ENCODE measurements at regions of chr1 and their contacts with region 1.

Region 1: GRCh38 chr1:66446261-66447001 is 87.5 kb upstream of the SGIP1 start:
- DNase-seq: peak; percentile 24 to 36
- H3K4me3 ChIP-seq: no peak overlapping the region
- H3K27ac ChIP-seq: no peak overlapping the region
- H3K4me1 ChIP-seq: no peaks in the 10 kb centered on the region
- H3K27me3 ChIP-seq: no peaks in the 10 kb centered on the region
- CTCF ChIP-seq: peak; percentile 86

Region 2: GRCh38 chr1:65059930-65060538 is 1386.4 kb before region 1 on chr1:
- CTCF ChIA-PET with region 1: no interaction called
- POLR2A ChIA-PET with region 1: no interaction called
- intact Hi-C with region 1: loop called (anchors 2 kb)
- DNase-seq: peak in 1 of 2 experiments; percentile 48
- H3K4me3 ChIP-seq: no peak overlapping the region
- H3K27ac ChIP-seq: no peak overlapping the region
- H3K4me1 ChIP-seq: no peaks in the 10 kb centered on the region
- H3K27me3 ChIP-seq: no peaks in the 10 kb centered on the region
- CTCF ChIP-seq: peak; percentile 78

Region 3: DNA sequence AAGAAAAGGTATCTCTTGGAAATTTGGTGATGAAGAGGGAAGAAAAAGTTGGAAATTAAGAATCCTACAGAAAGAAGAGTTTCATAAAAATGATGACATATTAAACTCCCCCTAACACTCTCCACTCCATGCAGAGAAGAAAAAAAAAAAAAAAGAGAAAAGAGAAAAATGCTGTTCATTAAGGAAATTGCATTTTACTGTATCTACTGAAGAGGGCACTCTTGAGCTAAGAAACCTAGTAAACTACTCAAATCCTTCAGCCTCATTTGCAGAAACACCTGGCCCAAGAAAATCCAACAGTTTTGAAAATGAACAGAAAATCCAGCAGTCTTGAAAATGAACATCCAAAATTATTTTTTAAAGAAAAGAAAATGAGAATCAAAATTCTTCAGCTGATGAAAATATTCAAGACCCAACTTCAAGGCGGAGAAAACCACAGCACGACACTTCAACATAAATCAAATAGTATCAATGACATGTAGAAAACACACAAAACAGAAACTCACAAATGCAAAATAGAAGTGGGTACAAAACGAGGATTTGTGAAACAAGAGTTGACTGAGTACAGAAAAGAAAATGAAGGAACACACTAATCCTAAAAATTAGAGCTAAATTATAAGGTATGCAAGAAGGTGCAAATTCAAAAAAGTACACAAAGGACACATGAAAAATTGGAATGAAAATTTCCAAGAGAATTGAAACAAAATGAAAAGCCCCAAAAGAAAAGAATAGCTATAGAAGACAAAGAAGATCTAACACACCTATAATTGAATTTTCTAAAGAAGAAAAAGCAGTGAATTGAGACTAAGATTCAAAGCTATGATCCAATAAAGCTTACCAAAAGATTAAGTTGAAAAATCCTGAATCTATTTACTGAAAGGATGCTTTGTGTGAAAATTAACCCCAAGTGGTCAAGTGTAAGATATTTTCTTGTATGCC is 1210.3 kb before region 1 on chr1:
- CTCF ChIA-PET with region 1: no interaction called
- POLR2A ChIA-PET with region 1: no interaction called
- intact Hi-C with region 1: loop called (anchors 10 kb)
- DNase-seq: no peak
- H3K4me3 ChIP-seq: no peak overlapping the region
- H3K27ac ChIP-seq: no peak overlapping the region
- H3K4me1 ChIP-seq: no peaks in the 10 kb centered on the region
- H3K27me3 ChIP-seq: no peaks in the 10 kb centered on the region
- CTCF ChIP-seq: peak; percentile 87

Region 4: DNA sequence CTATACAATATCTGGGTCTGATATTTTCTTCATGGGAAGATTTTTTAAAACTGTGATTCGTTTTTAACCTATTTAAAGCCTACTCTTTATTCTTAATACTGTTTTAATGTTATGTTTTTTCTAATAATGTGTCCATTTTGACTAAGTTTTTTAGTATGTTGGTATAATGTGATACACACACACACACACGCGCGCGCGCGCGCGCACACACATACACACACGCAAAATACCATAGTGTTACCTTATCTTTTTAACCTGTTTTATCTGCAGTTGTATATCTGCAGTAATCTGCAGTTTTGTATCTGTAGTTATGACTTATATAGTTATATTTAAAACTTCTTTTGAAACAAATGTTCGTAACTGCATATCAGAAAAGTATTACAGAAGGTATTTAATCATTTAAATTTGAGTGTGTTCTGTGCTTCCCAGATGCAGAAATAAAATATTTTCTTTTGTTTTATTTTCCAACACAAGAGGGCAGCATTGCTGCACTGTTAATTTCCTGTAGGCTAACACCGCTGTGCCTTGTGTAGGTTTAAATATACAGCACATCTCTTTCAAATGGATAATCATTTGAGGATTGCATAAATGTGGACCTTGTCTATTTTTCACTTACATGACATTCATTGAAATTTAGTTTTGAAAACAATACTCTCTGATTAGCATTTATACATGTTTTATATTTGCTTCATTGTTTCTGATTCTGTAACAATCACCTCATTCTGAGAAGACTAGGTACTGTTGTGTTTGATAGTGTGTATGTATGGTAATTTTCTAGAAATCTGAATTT is 487.7 kb before region 1 on chr1:
- CTCF ChIA-PET with region 1: interaction called, 4 read pairs
- POLR2A ChIA-PET with region 1: interaction called, 6 read pairs
- intact Hi-C with region 1: loop called (anchors 1 kb)
- DNase-seq: no peak
- H3K4me3 ChIP-seq: no peak overlapping the region
- H3K27ac ChIP-seq: no peak overlapping the region
- H3K4me1 ChIP-seq: no peaks in the 10 kb centered on the region
- H3K27me3 ChIP-seq: no peaks in the 10 kb centered on the region
- CTCF ChIP-seq: peak; percentile 85

Region 5: GRCh38 chr1:66253330-66253921 is 193.0 kb before region 1 on chr1:
- CTCF ChIA-PET with region 1: interaction called, 5 read pairs
- POLR2A ChIA-PET with region 1: no interaction called
- intact Hi-C with region 1: loop called (anchors 1 kb)
- DNase-seq: no peak
- H3K4me3 ChIP-seq: no peak overlapping the region
- H3K27ac ChIP-seq: no peak overlapping the region
- H3K4me1 ChIP-seq: no peaks in the 10 kb centered on the region
- H3K27me3 ChIP-seq: no peaks in the 10 kb centered on the region
- CTCF ChIP-seq: peak; percentile 74

Region 6: GRCh38 chr1:66711420-66711819 is 265.0 kb after region 1 on chr1:
- CTCF ChIA-PET with region 1: no interaction called
- POLR2A ChIA-PET with region 1: no interaction called
- intact Hi-C with region 1: loop called (anchors 5 kb)
- DNase-seq: no peak
- H3K4me3 ChIP-seq: no peak overlapping the region
- H3K27ac ChIP-seq: no peak overlapping the region
- H3K4me1 ChIP-seq: no peaks in the 10 kb centered on the region
- H3K27me3 ChIP-seq: no peaks in the 10 kb centered on the region
- CTCF ChIP-seq: peak; percentile 48; the same call in 1 of the 2 replicates

Region 7: GRCh38 chr1:66725885-66726665 is 279.6 kb after region 1 on chr1:
- CTCF ChIA-PET with region 1: interaction called, 6 read pairs
- POLR2A ChIA-PET with region 1: no interaction called
- intact Hi-C with region 1: loop called (anchors 1 kb)
- DNase-seq: peak; percentile 41 to 42
- H3K4me3 ChIP-seq: no peak overlapping the region
- H3K27ac ChIP-seq: no peak overlapping the region
- H3K4me1 ChIP-seq: no peaks in the 10 kb centered on the region
- H3K27me3 ChIP-seq: no peaks in the 10 kb centered on the region
- CTCF ChIP-seq: peak; percentile 96

Measured in PC-9 (cell line).